CD8-positive, alpha-beta T cell (primary cell): ENCODE measurements at regions of chr12 and their contacts with region 1.

Region 1: DNA sequence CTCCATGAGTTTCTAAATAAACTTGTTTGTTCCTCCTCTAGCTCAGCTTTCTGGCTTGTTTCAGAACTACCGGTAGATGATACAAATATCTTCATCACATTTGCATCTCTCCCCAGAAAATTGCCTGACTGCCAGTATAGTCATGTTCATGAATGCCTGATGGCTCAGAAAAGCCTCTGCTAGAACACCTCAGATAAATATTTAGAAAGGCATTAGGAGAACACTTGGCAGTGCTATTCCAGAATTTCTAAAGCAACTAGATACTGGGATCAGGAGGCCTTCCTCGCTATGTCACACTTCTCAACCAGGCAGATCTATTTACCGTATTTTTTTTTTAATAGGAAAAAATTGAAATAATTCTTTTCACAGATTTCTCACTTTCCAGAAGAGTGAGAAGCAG is 32.3 kb upstream of the KRAS start:
- DNase-seq: no peak
- ATAC-seq: no peak
- H3K4me3 ChIP-seq: no peak overlapping the region
- H3K4me3 Mint-ChIP-seq: peak overlapping the region; percentile 23
- H3K27ac ChIP-seq: no peak overlapping the region
- H3K27ac Mint-ChIP-seq: peak overlapping the region; percentile 70
- H3K4me1 ChIP-seq: peaks cover 40% of the 10 kb centered on the region
- H3K4me1 Mint-ChIP-seq: peaks cover 50% of the 10 kb centered on the region
- H3K27me3 ChIP-seq: no peaks in the 10 kb centered on the region
- H3K27me3 Mint-ChIP-seq: no peaks in the 10 kb centered on the region
- CTCF ChIP-seq: no peak

Region 2: DNA sequence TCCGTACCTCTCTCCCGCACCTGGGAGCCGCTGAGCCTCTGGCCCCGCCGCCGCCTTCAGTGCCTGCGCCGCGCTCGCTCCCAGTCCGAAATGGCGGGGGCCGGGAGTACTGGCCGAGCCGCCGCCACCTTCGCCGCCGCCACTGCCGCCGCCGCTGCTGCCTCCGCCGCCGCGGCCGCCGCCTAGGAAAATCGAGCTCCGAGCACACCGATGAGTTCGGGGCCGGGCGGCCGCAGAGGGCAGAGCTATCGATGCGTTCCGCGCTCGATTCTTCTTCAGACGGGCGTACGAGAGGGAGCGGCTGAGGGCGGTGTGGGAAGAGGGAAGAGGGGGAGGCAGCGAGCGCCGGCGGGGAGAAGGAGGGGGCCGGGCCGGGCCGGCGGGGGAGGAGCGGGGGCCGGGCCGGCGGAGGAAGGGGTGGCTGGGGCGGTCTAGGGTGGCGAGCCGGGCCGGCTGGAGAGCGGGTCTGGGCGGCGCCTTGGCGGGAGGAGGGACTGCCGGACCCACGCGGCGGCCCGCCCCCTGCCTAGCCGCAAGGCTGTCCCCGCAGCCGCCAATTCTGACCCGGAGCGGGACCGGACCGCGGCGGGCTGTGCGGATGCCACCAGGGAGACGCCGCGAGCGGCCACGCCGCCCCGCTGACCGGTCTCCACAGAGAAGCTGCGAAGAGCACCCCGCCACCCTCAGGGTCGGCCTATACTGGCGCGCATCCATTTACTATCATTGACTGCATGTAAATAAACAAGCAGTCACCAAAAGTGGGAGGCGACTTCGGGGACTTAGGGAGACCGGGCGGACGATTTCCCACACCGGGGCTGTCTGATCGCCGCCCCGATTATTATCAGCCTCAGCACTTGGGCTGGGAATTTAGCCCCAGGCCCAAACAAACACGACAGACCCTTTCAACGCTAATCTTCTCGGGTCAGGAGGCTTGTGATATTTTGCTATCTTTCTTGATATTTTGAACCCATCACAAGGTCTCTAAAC is 32.0 kb before region 1 on chr12 and contains the start of gene KRAS:
- CTCF ChIA-PET with region 1: no interaction called
- POLR2A ChIA-PET with region 1: interaction called, 3 read pairs
- intact Hi-C with region 1: loop called in 1 of 2 experiments (anchors 2 kb)
- DNase-seq: peak; percentile 84 to 98 (median 91)
- ATAC-seq: peak; percentile 90
- H3K4me3 ChIP-seq: peak within 1 kb of the TSS; percentile 70 to 79
- H3K4me3 Mint-ChIP-seq: peak within 1 kb of the TSS; percentile 93
- H3K27ac ChIP-seq: peak within 1 kb of the TSS; percentile 67 to 75
- H3K27ac Mint-ChIP-seq: peak within 1 kb of the TSS; percentile 95
- H3K4me1 ChIP-seq: peaks cover 11% of the 10 kb centered on the region
- H3K4me1 Mint-ChIP-seq: peaks cover 38% of the 10 kb centered on the region
- H3K27me3 ChIP-seq: no peaks in the 10 kb centered on the region
- H3K27me3 Mint-ChIP-seq: no peaks in the 10 kb centered on the region
- CTCF ChIP-seq: no peak
- total RNA-seq, gene KRAS: 47.1 to 49.3 TPM